ENCODE measurements at regions of chr12 and their contacts with region 1.

Region 1: DNA sequence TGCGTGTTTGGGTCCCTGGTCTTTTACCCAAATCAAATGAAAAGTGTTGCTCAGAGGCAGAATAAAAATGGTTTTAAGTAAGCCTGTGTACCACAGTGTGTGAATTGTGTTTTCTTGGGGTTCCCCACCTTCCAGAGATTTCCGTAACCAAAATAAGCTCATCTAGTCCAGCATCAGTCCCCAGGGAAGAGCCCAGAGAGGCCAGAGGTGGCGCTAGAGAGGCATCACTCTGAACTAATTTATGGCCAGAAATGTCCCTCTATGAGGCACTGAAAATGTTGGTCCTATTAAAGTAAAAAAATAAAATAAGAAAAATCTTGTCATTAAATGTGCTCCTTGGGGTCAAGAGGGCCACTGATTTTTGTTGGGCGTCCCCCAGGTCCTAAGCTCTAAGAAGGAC is 24.9 kb upstream of the PRKAB1 start:
- DNase-seq: peak in 1 of 2 experiments; percentile 76
- H3K4me3 ChIP-seq: no peak overlapping the region
- H3K27ac ChIP-seq: no peak overlapping the region
- H3K4me1 ChIP-seq: no peaks in the 10 kb centered on the region
- H3K27me3 ChIP-seq: no peaks in the 10 kb centered on the region
- CTCF ChIP-seq: peak; percentile 60 to 71 (median 67)
- EP300 ChIP-seq: no peak
- POLR2A ChIP-seq: no peak
- RAD21 ChIP-seq: peak; percentile 14 to 35; a peak in 3 of 4 replicates

Region 2: DNA sequence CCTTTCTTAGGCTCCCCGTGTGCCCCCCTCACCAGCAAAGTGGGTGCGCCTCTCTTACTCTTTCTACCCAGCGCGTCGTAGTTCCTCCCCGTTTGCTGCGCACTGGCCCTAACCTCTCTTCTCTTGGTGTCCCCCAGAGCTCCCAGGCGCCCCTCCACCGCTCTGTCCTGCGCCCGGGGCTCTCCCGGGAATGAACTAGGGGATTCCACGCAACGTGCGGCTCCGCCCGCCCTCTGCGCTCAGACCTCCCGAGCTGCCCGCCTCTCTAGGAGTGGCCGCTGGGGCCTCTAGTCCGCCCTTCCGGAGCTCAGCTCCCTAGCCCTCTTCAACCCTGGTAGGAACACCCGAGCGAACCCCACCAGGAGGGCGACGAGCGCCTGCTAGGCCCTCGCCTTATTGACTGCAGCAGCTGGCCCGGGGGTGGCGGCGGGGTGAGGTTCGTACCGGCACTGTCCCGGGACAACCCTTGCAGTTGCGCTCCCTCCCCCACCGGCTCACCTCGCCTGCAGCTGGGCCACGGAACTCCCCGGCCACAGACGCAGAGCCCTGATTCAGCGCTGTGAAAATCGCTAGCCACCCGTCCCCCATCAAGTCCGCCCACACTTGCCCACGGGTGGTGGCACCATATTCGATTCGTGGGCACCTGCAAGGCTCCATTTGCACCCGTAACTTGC is 48.1 kb before region 1 on chr12:
- CTCF ChIA-PET with region 1: interaction called, 20 read pairs
- POLR2A ChIA-PET with region 1: interaction called, 3 read pairs
- DNase-seq: peak in 1 of 2 experiments; percentile 71
- H3K4me3 ChIP-seq: peak overlapping the region; percentile 43 to 72 (median 62)
- H3K27ac ChIP-seq: no peak overlapping the region
- H3K4me1 ChIP-seq: peaks cover 0 to 5% (median 0%) of the 10 kb centered on the region in 4 experiments; a peak in 3 of 7 replicates
- H3K27me3 ChIP-seq: peaks cover 36 to 63% (median 51%) of the 10 kb centered on the region in 4 experiments
- CTCF ChIP-seq: no peak
- EP300 ChIP-seq: no peak
- POLR2A ChIP-seq: no peak
- RAD21 ChIP-seq: no peak

Region 3: GRCh38 chr12:119624966-119625365 is 18.0 kb before region 1 on chr12:
- CTCF ChIA-PET with region 1: interaction called, 32 read pairs
- POLR2A ChIA-PET with region 1: no interaction called
- DNase-seq: no peak
- H3K4me3 ChIP-seq: no peak overlapping the region
- H3K27ac ChIP-seq: no peak overlapping the region
- H3K4me1 ChIP-seq: no peaks in the 10 kb centered on the region
- H3K27me3 ChIP-seq: no peaks in the 10 kb centered on the region
- CTCF ChIP-seq: no peak
- EP300 ChIP-seq: no peak
- POLR2A ChIP-seq: no peak
- RAD21 ChIP-seq: no peak

Region 4: DNA sequence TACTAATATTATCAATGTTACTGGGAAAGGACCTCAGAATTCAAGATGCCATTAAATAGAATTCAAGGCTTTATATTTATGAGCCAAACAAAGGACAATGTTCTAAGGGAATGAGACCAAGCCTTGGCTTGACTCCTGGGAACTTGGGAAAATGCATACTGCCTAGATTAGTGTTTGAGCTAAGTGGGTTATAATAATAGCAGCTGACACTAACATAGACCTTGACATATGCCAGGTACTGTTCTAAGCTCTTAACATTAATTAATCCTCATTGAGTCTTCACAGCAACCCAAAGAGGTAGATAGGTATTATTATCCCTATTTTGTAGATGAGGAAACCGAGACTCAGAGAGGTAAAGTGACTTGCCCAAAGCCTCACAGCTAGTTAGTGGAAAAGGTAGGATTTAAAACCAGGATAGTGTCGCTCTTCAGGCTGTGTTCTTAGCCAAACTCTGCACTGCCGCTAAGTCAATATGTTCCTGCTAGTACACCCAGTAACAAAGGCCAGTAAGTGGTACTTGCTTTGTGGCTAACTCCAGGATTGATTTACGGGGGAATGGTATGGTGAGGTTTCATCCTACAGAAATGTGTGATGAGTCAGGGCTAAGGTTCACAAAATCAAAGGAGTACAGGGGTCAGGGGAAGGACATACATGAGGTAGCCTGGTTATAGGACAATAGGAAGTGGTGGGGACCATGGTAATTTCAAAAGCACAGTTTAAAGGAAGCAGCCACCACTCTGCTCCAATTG is 10.9 kb before region 1 on chr12:
- CTCF ChIA-PET with region 1: interaction called, 16 read pairs
- POLR2A ChIA-PET with region 1: interaction called, 4 read pairs
- DNase-seq: no peak
- H3K4me3 ChIP-seq: no peak overlapping the region
- H3K27ac ChIP-seq: no peak overlapping the region
- H3K4me1 ChIP-seq: no peaks in the 10 kb centered on the region
- H3K27me3 ChIP-seq: no peaks in the 10 kb centered on the region
- CTCF ChIP-seq: no peak
- EP300 ChIP-seq: no peak
- POLR2A ChIP-seq: no peak
- RAD21 ChIP-seq: no peak

Region 5: GRCh38 chr12:119659289-119659897 is 16.4 kb after region 1 on chr12:
- CTCF ChIA-PET with region 1: interaction called, 19 read pairs
- POLR2A ChIA-PET with region 1: no interaction called
- DNase-seq: no peak
- H3K4me3 ChIP-seq: no peak overlapping the region
- H3K27ac ChIP-seq: no peak overlapping the region
- H3K4me1 ChIP-seq: no peaks in the 10 kb centered on the region
- H3K27me3 ChIP-seq: no peaks in the 10 kb centered on the region; a peak in 1 of 7 replicates
- CTCF ChIP-seq: peak in 2 of 3 experiments; percentile 41 to 71; a peak in 2 of 4 replicates
- EP300 ChIP-seq: no peak
- POLR2A ChIP-seq: no peak
- RAD21 ChIP-seq: peak; percentile 34 to 39

Measured in H1 (cell line).